ENCODE measurements at regions of chr3 and their contacts with region 1.

Region 1: GRCh38 chr3:120095226-120095978 is 1.2 kb upstream of the GSK3B start:
- DNase-seq: peak; percentile 80 to 93 (median 85)
- H3K4me3 ChIP-seq: peak overlapping the region; percentile 89
- H3K4me3 Mint-ChIP-seq: no peak overlapping the region
- H3K27ac ChIP-seq: peak overlapping the region; percentile 98
- H3K27ac Mint-ChIP-seq: peak overlapping the region in 1 of 8 donors; percentile 99
- H3K4me1 ChIP-seq: peaks cover 30% of the 10 kb centered on the region
- H3K4me1 Mint-ChIP-seq: peaks cover 19 to 28% (median 26%) of the 10 kb centered on the region in 3 donors
- H3K27me3 ChIP-seq: no peaks in the 10 kb centered on the region
- H3K27me3 Mint-ChIP-seq: no peaks in the 10 kb centered on the region

Region 2: DNA sequence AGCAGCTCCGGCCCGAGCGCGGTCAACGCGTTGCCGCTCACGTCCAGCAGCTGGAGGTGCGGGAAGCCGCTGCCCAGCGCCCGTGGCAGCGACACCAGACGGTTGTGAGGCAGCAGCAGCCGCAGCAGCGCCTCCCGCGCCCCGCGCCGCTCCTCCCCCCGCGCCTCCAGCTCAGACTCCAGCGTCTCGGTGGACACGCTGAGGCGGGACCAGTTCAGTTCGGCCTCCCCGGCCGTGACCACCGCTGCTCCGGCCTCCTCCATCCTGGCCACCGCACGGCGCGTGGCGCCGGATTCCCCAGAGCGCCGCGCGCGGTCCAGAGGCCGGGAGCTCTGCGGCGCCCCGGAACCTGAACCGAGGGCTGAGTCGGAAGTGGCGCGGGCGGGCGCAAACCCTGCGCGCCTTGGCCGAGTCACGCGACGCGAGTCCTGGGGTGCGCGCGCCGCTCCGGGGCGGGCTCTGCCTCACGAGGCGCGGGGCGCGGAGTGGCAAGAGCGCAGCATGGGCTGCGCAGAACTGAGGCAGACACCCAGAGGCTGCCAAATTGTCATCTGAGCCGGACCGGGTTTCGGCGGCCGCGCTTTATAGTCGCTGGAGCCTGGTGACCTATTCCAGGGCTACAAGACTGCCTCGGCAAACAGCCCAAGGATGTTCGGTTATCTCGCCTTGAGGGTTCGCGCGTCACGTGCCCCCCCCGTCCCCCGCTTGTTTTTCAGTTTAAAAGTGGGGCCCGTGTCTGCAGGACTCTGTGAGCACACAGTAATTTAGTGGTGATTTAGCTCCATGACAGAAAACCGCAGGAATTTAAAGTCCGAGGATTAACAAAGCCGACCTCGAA is 253.8 kb after region 1 on chr3 and contains the start of gene LRRC58:
- CTCF ChIA-PET with region 1: interaction called, 4 read pairs
- POLR2A ChIA-PET with region 1: interaction called, 24 read pairs
- DNase-seq: peak; percentile 84 to 95 (median 90)
- H3K4me3 ChIP-seq: peak within 1 kb of the TSS; percentile 86
- H3K4me3 Mint-ChIP-seq: peak within 1 kb of the TSS; percentile 91 to 97 (median 93)
- H3K27ac ChIP-seq: peak within 1 kb of the TSS; percentile 74
- H3K27ac Mint-ChIP-seq: peak within 1 kb of the TSS; percentile 88 to 96 (median 94)
- H3K4me1 ChIP-seq: peaks cover 39% of the 10 kb centered on the region
- H3K4me1 Mint-ChIP-seq: peaks cover 44 to 53% (median 53%) of the 10 kb centered on the region in 3 donors
- H3K27me3 ChIP-seq: no peaks in the 10 kb centered on the region
- H3K27me3 Mint-ChIP-seq: peaks cover 3 to 9% of the 10 kb centered on the region in 2 donors
- total RNA-seq, gene LRRC58: 37.6 to 37.9 TPM